SK-N-SH (cell line): ENCODE measurements at regions of chrX and their contacts with region 1.

Region 1: DNA sequence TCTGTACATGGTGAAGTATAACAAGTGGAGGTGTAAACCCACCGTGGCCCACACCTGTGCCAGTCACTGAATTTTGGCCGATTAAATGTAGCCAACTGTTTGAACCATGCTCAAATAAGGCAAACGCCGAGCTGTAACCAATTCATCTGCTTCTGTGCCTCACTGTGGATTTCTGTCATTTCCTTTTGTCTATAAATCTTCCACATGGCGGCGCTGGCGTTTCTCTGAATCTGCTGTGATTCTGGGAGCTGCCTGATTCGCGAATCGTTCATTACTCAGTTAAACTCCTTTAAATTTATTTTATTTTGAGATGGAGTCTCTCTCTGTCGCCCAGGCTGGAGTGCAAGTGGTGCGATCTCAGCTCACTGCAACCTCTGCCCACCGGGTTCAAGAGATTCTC is 19.2 kb downstream of the SUPT20HL2 start:
- DNase-seq: peak; percentile 31
- H3K4me3 ChIP-seq: no peak overlapping the region
- H3K27ac ChIP-seq: no peak overlapping the region
- H3K4me1 ChIP-seq: no peaks in the 10 kb centered on the region; a peak in 1 of 4 replicates
- H3K27me3 ChIP-seq: no peaks in the 10 kb centered on the region; the same call in 1 of the 2 replicates
- CTCF ChIP-seq: peak; percentile 56
- EP300 ChIP-seq: no peak
- RAD21 ChIP-seq: peak; percentile 63

Region 2: GRCh38 chrX:24306440-24306839 is 11.8 kb after region 1 on chrX:
- CTCF ChIA-PET with region 1: interaction called, 27 read pairs
- POLR2A ChIA-PET with region 1: no interaction called
- DNase-seq: no peak
- H3K4me3 ChIP-seq: no peak overlapping the region
- H3K27ac ChIP-seq: no peak overlapping the region
- H3K4me1 ChIP-seq: no peaks in the 10 kb centered on the region; a peak in 1 of 4 replicates
- H3K27me3 ChIP-seq: peaks cover 5% of the 10 kb centered on the region; the same call in 1 of the 2 replicates
- CTCF ChIP-seq: no peak
- EP300 ChIP-seq: no peak
- RAD21 ChIP-seq: no peak